CD4-positive, alpha-beta memory T cell (primary cell): ENCODE measurements at regions of chr16 and their contacts with region 1.

Region 1: DNA sequence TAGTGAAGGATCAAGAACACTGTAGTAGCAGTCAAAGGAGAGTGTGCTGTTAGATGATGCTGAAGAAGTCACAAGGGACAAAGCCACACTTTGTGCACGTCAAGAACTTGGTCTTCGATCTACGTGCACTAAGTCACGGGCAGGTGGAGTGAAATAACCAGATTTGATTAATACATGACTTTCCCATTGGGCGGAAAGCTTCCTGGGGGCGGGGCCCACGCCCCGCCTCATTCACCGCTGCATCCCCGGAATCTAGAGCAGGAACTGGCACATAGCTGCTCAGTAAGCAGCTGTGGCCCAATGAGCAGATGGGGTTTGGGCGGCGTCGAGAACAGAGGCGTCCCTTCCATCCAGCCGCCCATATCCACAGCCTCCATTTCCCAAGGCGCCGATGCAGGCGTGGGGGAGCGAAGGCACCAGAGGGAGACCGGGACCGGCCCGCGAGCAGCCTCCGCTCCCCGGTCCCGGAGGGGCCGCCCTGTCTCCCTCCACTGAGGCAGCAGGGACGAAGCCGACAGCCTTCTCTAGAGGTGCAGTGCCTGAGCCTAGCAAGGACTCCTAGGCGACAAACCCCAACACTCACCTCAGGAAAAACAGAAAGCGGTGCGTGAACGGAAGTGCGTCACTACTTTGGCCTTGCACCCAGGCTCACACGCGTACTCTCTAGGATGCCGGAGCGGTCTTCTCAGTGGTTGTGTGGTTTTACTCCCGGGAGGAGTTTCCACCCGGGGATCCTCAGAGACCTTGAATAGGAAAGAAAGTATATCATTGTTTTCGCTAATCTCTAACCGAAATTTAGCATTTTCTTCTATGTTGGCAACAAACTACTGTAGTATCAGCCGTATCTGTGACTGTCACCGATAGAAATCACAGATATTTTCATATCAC is 4.9 kb downstream of the ZNF19 start:
- DNase-seq: peak; percentile 84 to 92 (median 87)
- H3K4me3 ChIP-seq: peak overlapping the region; percentile 87 to 98
- H3K4me3 Mint-ChIP-seq: peak overlapping the region; percentile 82 to 92 (median 88)
- H3K27ac ChIP-seq: peak overlapping the region; percentile 87
- H3K27ac Mint-ChIP-seq: peak overlapping the region; percentile 81 to 98 (median 97)
- H3K4me1 ChIP-seq: peaks cover 10% of the 10 kb centered on the region
- H3K4me1 Mint-ChIP-seq: peaks cover 14 to 18% (median 17%) of the 10 kb centered on the region in 4 donors
- H3K27me3 ChIP-seq: no peaks in the 10 kb centered on the region
- H3K27me3 Mint-ChIP-seq: peaks cover 0 to 3% of the 10 kb centered on the region in 2 donors

Region 2: GRCh38 chr16:70800781-70801530 is 683.3 kb before region 1 on chr16 and contains the start of gene VAC14:
- CTCF ChIA-PET with region 1: no interaction called
- POLR2A ChIA-PET with region 1: no interaction called
- intact Hi-C with region 1: loop called (anchors 1 kb)
- DNase-seq: peak; percentile 96 to 97 (median 97)
- H3K4me3 ChIP-seq: peak within 1 kb of the TSS; percentile 31 to 67
- H3K4me3 Mint-ChIP-seq: peak within 1 kb of the TSS; percentile 93 to 98 (median 96)
- H3K27ac ChIP-seq: peak within 1 kb of the TSS; percentile 61
- H3K27ac Mint-ChIP-seq: peak within 1 kb of the TSS; percentile 92 to 96 (median 94)
- H3K4me1 ChIP-seq: peaks cover 27% of the 10 kb centered on the region
- H3K4me1 Mint-ChIP-seq: peaks cover 18 to 47% (median 31%) of the 10 kb centered on the region in 4 donors
- H3K27me3 ChIP-seq: no peaks in the 10 kb centered on the region
- H3K27me3 Mint-ChIP-seq: no peaks in the 10 kb centered on the region
- total RNA-seq, gene VAC14: 37.8 to 40.6 TPM

Region 3: DNA sequence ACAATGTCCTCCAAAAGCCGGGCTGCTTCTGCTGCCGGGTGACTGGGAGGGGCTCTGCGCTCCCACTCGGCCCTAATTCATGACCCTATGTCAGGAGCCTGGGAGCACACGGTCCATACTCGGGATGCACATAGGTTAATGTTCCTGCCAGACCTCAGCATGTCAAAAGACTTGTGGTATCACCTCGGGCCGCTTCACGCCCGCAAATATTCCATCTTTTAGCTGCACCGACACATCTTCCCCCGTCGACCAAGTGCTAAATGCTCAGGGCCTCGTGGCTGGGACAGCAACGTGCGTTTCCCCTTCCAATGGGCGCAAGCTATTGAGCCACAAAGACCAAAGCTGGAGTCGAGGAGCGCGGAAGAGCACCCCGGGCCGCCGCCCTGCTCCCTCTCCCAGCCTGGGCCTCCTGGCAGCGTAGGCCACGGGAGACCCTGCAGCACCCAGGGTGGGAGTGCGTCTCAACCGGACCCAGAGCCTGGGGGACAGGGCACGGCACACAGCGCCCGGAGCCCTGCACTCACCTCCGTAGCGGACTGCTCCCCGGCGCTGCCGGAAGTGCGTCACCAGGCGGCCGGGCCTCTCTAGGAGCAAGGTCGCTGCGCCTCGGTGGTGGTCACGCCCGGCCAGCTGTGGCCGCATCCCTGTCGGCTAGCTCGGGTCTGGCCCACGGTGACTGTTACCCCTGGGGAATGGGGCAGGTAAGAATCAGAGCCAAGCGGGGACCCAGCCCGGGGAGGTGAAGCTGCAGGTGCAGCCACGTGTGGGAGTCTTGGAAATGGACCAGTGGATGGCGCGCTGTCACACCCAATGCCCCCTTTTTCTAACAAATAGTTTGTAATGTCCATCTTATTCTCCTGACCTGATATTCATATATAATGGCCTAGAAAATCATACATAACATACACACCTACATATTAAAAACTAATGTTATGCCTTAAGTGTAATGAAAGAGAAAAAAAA is 22.3 kb before region 1 on chr16 and contains the start of gene ZNF23:
- CTCF ChIA-PET with region 1: interaction called, 31 read pairs
- POLR2A ChIA-PET with region 1: interaction called, 74 read pairs
- intact Hi-C with region 1: loop called (anchors 1 kb)
- DNase-seq: peak; percentile 69 to 77 (median 71)
- H3K4me3 ChIP-seq: peak within 1 kb of the TSS; percentile 80 to 90
- H3K4me3 Mint-ChIP-seq: peak within 1 kb of the TSS; percentile 94 to 97 (median 96)
- H3K27ac ChIP-seq: peak within 1 kb of the TSS; percentile 76
- H3K27ac Mint-ChIP-seq: peak within 1 kb of the TSS; percentile 81 to 97 (median 95)
- H3K4me1 ChIP-seq: peaks cover 20% of the 10 kb centered on the region
- H3K4me1 Mint-ChIP-seq: peaks cover 10 to 31% (median 22%) of the 10 kb centered on the region in 4 donors
- H3K27me3 ChIP-seq: no peaks in the 10 kb centered on the region
- H3K27me3 Mint-ChIP-seq: no peaks in the 10 kb centered on the region
- total RNA-seq, gene ZNF23: 15.2 to 16.2 TPM

Region 4: GRCh38 chr16:71515026-71515425 is 30.8 kb after region 1 on chr16:
- CTCF ChIA-PET with region 1: no interaction called
- POLR2A ChIA-PET with region 1: no interaction called
- intact Hi-C with region 1: no loop called
- DNase-seq: no peak
- H3K4me3 ChIP-seq: no peak overlapping the region
- H3K4me3 Mint-ChIP-seq: no peak overlapping the region
- H3K27ac ChIP-seq: no peak overlapping the region
- H3K27ac Mint-ChIP-seq: no peak overlapping the region
- H3K4me1 ChIP-seq: no peaks in the 10 kb centered on the region
- H3K4me1 Mint-ChIP-seq: no peaks in the 10 kb centered on the region
- H3K27me3 ChIP-seq: no peaks in the 10 kb centered on the region
- H3K27me3 Mint-ChIP-seq: peaks cover 2 to 8% of the 10 kb centered on the region in 2 donors

Region 5: GRCh38 chr16:71552698-71553451 is 68.6 kb after region 1 on chr16:
- CTCF ChIA-PET with region 1: no interaction called
- POLR2A ChIA-PET with region 1: no interaction called
- intact Hi-C with region 1: no loop called
- DNase-seq: no peak
- H3K4me3 ChIP-seq: no peak overlapping the region
- H3K4me3 Mint-ChIP-seq: no peak overlapping the region
- H3K27ac ChIP-seq: no peak overlapping the region
- H3K27ac Mint-ChIP-seq: no peak overlapping the region
- H3K4me1 ChIP-seq: no peaks in the 10 kb centered on the region
- H3K4me1 Mint-ChIP-seq: peaks cover 0 to 1% (median 0%) of the 10 kb centered on the region in 4 donors
- H3K27me3 ChIP-seq: no peaks in the 10 kb centered on the region
- H3K27me3 Mint-ChIP-seq: peaks cover 5 to 10% of the 10 kb centered on the region in 2 donors